ENCODE measurements at regions of chr1 and their contacts with region 1.

Region 1: GRCh38 chr1:161792740-161793139 is 26.6 kb downstream of the ATF6 start:
- DNase-seq: no peak
- H3K4me3 ChIP-seq: no peak overlapping the region
- H3K27ac ChIP-seq: no peak overlapping the region
- H3K4me1 ChIP-seq: no peaks in the 10 kb centered on the region
- H3K27me3 ChIP-seq: no peaks in the 10 kb centered on the region
- CTCF ChIP-seq: peak in 5 of 6 experiments; percentile 40 to 70 (median 53)
- POLR2A ChIP-seq: no peak

Region 2: GRCh38 chr1:161726596-161727457 is 65.9 kb before region 1 on chr1:
- intact Hi-C with region 1: no loop called
- DNase-seq: peak; percentile 60
- H3K4me3 ChIP-seq: peak overlapping the region; percentile 47 to 86 (median 68)
- H3K27ac ChIP-seq: peak overlapping the region; percentile 74 to 87 (median 82)
- H3K4me1 ChIP-seq: peaks cover 5 to 31% (median 5%) of the 10 kb centered on the region in 3 donors
- H3K27me3 ChIP-seq: peaks cover 0 to 14% (median 0%) of the 10 kb centered on the region in 4 donors
- CTCF ChIP-seq: peak in 1 of 6 experiments; percentile 17
- POLR2A ChIP-seq: peak in 2 of 4 donors; percentile 33 to 71

Region 3: DNA sequence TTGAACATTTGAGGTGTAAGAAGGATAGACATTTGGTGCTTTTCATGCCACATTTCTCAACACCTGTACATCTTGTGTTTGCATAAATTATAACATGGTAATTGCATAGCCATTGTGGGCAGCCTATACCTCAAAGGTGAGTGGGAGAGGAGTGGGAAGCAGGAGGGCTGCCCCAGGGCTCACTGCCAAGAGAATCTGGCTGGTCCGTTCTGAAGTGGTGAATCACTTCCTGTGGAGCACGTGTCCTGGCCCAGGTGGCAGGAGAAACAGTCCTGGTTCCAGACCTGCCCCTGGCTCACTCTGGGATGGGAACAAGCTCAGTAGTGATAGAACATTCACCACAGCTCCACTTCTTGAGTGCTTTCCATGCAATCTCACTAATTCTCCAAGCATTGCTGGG is 242.5 kb after region 1 on chr1:
- intact Hi-C with region 1: loop called (anchors 10 kb)
- DNase-seq: no peak
- H3K4me3 ChIP-seq: no peak overlapping the region
- H3K27ac ChIP-seq: no peak overlapping the region
- H3K4me1 ChIP-seq: peaks cover 0 to 3% (median 0%) of the 10 kb centered on the region in 3 donors
- H3K27me3 ChIP-seq: peaks cover 0 to 24% (median 0%) of the 10 kb centered on the region in 4 donors
- CTCF ChIP-seq: no peak
- POLR2A ChIP-seq: no peak

Measured in esophagus squamous epithelium (tissue), 5 donors.